Posterior vena cava (tissue), 2 donors: ENCODE measurements at regions of chr19 and their contacts with region 1.

Region 1: GRCh38 chr19:23969630-23970029 is 54.9 kb downstream of the ZNF726 start:
- DNase-seq: no peak

Region 2: GRCh38 chr19:23699082-23699761 is 270.4 kb before region 1 on chr19:
- intact Hi-C with region 1: no loop called
- DNase-seq: no peak

Region 3: GRCh38 chr19:23876261-23876660 is 93.4 kb before region 1 on chr19:
- intact Hi-C with region 1: loop called in 1 of 2 experiments (anchors 5 kb)
- DNase-seq: no peak

Region 4: DNA sequence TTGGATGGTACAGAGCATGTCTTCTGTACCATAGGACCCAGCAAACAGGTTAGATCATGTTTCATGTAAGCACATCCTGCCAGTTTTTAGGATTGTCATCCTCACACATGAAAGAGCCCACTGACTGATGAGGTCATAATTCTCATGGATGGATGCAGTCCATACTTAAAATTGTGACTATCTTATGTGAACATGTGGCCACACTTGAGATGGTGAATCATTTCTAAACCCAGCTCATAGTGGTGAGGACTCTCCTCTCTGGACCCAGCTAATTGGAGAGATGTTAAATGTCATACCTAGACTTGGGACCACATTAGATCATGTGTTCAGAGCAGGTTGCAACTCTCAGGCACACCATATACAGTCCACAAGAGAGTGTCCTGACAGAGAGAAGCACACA is 92.6 kb after region 1 on chr19:
- intact Hi-C with region 1: no loop called
- DNase-seq: no peak